HCT116 (cell line): ENCODE measurements at regions of chr1 and their contacts with region 1.

Region 1: GRCh38 chr1:212062832-212063438 is 27.4 kb downstream of the DTL start:
- DNase-seq: peak; percentile 22
- ATAC-seq: peak; percentile 83
- H3K4me3 ChIP-seq: no peak overlapping the region
- H3K27ac ChIP-seq: no peak overlapping the region
- H3K4me1 ChIP-seq: no peaks in the 10 kb centered on the region
- H3K27me3 ChIP-seq: no peaks in the 10 kb centered on the region
- CTCF ChIP-seq: peak; percentile 58 to 66 (median 60); a peak in 5 of 6 replicates
- POLR2A ChIP-seq: no peak
- RAD21 ChIP-seq: peak; percentile 65

Region 2: GRCh38 chr1:212291505-212292134 is 228.7 kb after region 1 on chr1:
- CTCF ChIA-PET with region 1: interaction called, 3 read pairs
- POLR2A ChIA-PET with region 1: interaction called, 3 read pairs
- RAD21 ChIA-PET with region 1: no interaction called
- intact Hi-C with region 1: loop called (anchors 2 kb)
- DNase-seq: peak; percentile 27
- ATAC-seq: peak; percentile 87
- H3K4me3 ChIP-seq: no peak overlapping the region
- H3K27ac ChIP-seq: peak overlapping the region; percentile 66
- H3K4me1 ChIP-seq: peaks cover 31 to 42% of the 10 kb centered on the region in 2 experiments
- H3K27me3 ChIP-seq: no peaks in the 10 kb centered on the region
- CTCF ChIP-seq: peak; percentile 71 to 81 (median 76); a peak in 5 of 6 replicates
- POLR2A ChIP-seq: no peak
- RAD21 ChIP-seq: peak; percentile 88

Region 3: GRCh38 chr1:212368073-212368484 is 305.1 kb after region 1 on chr1:
- CTCF ChIA-PET with region 1: interaction called, 4 read pairs
- POLR2A ChIA-PET with region 1: no interaction called
- RAD21 ChIA-PET with region 1: no interaction called
- intact Hi-C with region 1: loop called (anchors 1 kb)
- DNase-seq: peak; percentile 66
- ATAC-seq: peak; percentile 98
- H3K4me3 ChIP-seq: no peak overlapping the region
- H3K27ac ChIP-seq: no peak overlapping the region
- H3K4me1 ChIP-seq: no peaks in the 10 kb centered on the region
- H3K27me3 ChIP-seq: no peaks in the 10 kb centered on the region
- CTCF ChIP-seq: peak; percentile 76 to 96 (median 92); a peak in 5 of 6 replicates
- POLR2A ChIP-seq: no peak
- RAD21 ChIP-seq: peak; percentile 92

Region 4: DNA sequence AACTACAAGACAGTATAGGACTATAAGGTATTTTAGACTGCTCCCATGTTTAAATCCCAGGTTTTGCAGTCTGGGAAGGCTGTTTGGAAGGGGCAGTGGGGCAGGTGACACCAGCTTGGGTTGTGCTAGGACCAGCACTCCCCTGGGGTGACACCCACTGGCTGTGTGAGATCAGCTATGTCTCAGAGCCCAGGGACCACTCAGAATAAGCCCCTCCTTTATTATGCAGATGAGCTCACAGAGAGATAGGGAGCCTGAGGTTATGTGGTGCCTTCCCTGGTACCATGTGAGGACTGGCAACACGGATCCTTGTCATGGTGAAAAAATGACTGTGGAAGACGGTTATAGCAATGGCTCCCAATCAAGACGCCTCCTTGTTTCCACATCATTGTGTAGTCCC is 440.8 kb after region 1 on chr1:
- CTCF ChIA-PET with region 1: no interaction called
- POLR2A ChIA-PET with region 1: no interaction called
- RAD21 ChIA-PET with region 1: no interaction called
- intact Hi-C with region 1: no loop called
- DNase-seq: no peak
- ATAC-seq: peak; percentile 49; the same call in 1 of the 2 replicates
- H3K4me3 ChIP-seq: no peak overlapping the region
- H3K27ac ChIP-seq: no peak overlapping the region
- H3K4me1 ChIP-seq: no peaks in the 10 kb centered on the region
- H3K27me3 ChIP-seq: no peaks in the 10 kb centered on the region
- CTCF ChIP-seq: no peak
- POLR2A ChIP-seq: no peak
- RAD21 ChIP-seq: no peak